ENCODE measurements at regions of chr16 and their contacts with region 1.

Region 1: DNA sequence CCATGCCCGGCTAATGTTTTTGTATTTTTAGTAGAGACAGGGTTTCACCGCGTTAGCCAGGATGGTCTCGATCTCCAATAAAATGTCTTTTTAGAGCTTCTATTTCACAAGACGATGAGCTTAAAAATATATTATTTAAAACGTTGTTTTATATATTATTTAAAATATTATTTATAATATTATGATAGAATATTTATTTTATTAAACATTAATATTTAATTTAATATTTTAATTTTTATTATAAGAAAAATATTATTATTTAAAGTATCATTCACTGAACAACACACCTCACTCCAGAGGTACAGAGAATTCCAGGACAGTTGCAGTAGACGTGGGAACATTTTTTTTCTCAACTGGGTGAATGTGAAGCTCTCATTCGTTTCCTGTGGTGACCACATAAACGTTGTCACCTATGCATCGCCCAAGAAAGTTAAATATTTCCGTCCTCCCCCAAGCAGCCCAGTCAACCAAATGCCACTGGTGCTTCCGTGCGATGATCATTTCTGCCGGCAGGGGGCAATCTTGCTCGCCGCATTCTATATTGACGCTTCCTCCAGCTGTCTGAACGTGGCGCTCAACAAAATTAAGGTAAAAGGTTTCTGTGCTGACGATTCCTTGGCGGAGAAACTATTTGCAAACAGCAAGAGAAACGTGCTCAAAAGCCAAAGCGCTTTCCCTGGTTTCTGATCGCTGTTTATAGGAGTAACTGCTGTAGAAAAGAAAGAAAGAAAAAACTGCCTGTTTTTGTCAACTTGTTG is 41.7 kb upstream of the PRSS54 start:
- DNase-seq: peak; percentile 81

Region 2: DNA sequence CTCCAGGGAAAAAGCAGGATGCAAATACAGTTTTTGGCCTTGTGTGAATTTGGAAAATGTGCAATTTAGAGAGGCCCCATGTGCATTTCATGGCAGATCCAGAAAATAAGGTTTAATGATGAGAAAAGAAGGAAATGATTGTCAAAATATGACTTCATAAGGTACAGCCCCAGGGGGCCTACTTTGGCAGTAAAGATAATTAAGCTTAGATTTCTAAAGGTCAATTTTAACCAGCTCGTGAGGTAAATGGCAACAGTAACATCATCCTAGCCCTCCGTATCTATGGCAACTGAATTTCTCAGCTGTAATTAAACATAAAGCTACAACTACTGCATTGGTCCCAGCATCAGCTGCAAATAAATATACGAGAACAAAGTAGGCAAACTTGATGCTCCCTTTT is 11.7 kb before region 1 on chr16:
- CTCF ChIA-PET with region 1: interaction called, 10 read pairs
- POLR2A ChIA-PET with region 1: no interaction called
- DNase-seq: no peak

Region 3: DNA sequence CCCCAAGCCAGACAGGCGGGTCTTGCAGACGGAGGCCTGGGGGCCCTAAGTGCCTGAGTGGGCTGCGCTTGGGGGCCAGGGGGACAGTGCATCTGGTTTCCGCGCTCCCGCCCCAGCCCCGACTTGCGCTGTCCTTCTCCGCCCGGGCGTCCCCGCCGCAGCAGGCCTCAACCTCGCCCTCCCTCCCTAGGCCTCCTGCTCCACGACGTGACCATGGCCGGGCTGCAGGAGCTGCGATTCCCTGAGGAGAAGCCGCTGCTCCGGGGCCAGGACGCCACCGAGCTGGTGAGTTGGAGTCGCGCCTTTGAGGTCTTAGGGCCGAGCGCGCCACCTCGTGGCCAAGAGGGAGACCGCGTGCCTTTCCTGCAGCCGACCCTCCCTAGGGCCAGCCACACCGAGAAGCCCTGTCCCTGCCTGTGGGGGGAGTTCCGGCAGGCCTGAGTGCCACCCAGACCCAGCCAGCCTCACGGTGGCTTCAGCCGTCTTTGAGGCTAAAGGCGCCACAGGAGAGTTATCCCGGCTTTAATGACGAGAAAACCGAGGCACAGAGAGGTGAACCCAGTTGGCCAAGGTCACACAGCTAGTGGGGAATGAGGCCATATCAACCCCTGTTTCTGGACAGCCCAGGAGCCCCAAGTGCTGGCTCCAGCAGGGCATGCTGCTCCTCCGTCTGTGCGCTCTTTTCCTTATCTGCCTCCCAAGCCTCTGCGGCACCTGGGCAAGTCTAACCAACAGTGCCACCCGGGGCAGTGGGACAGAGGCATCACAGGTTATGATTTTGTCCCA is 151.2 kb after region 1 on chr16:
- CTCF ChIA-PET with region 1: interaction called, 43 read pairs
- POLR2A ChIA-PET with region 1: interaction called, 4 read pairs
- DNase-seq: peak; percentile 92

Region 4: GRCh38 chr16:58755989-58756649 is 419.6 kb after region 1 on chr16:
- CTCF ChIA-PET with region 1: interaction called, 11 read pairs
- POLR2A ChIA-PET with region 1: no interaction called
- DNase-seq: peak; percentile 74